Natural killer cell (primary cell): ENCODE measurements at regions of chr2 and their contacts with region 1.

Region 1: DNA sequence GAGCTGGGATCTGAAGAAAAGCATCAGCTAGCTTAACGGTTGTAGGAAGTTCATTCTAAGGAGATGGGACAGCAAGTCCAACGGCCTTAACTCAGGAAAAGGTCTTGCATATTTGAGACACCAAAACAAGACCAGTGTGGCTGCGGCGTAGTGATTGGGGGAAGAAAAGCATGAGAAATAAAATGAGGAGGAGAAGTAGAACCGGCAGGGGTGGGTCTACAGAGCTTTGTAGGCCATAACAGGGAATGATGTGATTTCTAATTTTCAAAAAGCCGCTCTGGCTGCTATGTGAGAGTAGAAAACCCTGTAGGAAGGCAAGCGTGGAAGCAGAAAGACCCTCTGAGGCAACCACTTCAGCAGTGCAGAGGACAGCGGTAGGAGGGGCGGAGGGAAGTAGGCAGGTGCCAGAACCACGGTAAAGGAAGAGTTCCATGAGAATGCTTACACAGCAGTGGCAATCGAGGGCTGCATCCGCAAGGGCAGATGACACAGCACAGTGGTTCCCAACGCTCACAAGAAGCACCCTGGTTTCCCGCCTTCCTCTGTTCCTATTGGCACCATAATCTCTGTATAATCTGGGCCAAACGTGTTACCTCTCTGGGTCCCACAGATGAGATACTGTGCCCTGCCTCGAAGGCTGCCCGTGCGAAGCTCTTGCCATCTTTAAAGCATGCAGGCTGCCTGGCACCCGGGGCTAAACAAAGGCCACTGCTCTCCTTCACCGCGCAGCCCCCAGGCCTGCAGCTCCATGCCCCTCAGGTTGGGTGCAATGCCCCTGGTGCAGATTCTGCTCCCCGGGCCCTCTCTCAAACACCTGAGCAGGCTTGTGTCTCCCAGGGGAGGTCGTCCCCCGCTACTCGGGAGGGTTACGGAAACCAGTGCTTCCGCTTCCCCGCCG is 791 bp downstream of the ANKRD39 start:
- DNase-seq: peak in 1 of 2 donors; percentile 57
- ATAC-seq: no peak
- H3K4me3 ChIP-seq: peak overlapping the region; percentile 77
- H3K4me3 Mint-ChIP-seq: peak overlapping the region; percentile 82
- H3K27ac ChIP-seq: peak overlapping the region; percentile 83
- H3K27ac Mint-ChIP-seq: peak overlapping the region; percentile 77 to 81
- H3K4me1 ChIP-seq: peaks cover 36% of the 10 kb centered on the region
- H3K4me1 Mint-ChIP-seq: peaks cover 34 to 46% of the 10 kb centered on the region in 2 donors
- H3K27me3 ChIP-seq: no peaks in the 10 kb centered on the region
- H3K27me3 Mint-ChIP-seq: no peaks in the 10 kb centered on the region
- CTCF ChIP-seq: no peak

Region 2: DNA sequence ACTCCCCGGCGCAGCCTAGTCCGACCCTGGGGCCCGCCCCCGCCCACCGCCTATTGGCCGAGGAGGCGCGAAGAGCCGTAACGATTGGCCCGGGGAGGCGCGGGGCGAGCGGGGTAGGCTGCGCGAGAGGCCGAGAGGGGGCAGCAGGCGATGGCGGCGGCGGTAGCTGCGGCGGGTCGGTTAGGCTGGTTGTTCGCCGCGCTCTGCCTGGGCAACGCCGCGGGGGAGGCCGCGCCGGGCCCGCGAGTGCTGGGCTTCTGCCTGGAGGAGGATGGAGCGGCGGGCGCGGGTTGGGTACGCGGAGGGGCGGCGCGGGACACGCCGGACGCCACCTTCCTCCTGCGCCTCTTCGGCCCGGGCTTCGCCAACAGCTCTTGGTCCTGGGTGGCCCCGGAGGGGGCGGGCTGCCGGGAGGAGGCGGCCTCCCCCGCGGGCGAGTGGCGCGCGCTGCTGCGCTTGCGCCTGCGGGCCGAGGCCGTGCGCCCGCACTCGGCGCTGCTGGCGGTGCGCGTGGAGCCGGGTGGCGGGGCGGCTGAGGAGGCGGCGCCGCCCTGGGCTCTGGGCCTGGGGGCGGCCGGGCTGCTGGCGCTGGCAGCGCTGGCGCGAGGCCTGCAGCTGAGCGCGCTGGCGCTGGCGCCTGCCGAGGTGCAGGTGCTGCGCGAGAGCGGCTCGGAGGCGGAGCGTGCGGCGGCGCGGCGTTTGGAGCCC is 40.7 kb before region 1 on chr2 and contains the start of gene CNNM3:
- intact Hi-C with region 1: loop called (anchors 5 kb)
- DNase-seq: peak; percentile 94 to 97
- ATAC-seq: peak; percentile 88 to 97 (median 89)
- H3K4me3 ChIP-seq: peak within 1 kb of the TSS; percentile 85
- H3K4me3 Mint-ChIP-seq: peak within 1 kb of the TSS; percentile 88
- H3K27ac ChIP-seq: peak within 1 kb of the TSS; percentile 71
- H3K27ac Mint-ChIP-seq: peak within 1 kb of the TSS; percentile 82
- H3K4me1 ChIP-seq: peaks cover 46% of the 10 kb centered on the region
- H3K4me1 Mint-ChIP-seq: peaks cover 56 to 66% of the 10 kb centered on the region in 2 donors
- H3K27me3 ChIP-seq: no peaks in the 10 kb centered on the region
- H3K27me3 Mint-ChIP-seq: no peaks in the 10 kb centered on the region
- CTCF ChIP-seq: peak; percentile 60
- total RNA-seq, gene CNNM3: 33.8 to 55.2 (median 45.6) TPM

Region 3: DNA sequence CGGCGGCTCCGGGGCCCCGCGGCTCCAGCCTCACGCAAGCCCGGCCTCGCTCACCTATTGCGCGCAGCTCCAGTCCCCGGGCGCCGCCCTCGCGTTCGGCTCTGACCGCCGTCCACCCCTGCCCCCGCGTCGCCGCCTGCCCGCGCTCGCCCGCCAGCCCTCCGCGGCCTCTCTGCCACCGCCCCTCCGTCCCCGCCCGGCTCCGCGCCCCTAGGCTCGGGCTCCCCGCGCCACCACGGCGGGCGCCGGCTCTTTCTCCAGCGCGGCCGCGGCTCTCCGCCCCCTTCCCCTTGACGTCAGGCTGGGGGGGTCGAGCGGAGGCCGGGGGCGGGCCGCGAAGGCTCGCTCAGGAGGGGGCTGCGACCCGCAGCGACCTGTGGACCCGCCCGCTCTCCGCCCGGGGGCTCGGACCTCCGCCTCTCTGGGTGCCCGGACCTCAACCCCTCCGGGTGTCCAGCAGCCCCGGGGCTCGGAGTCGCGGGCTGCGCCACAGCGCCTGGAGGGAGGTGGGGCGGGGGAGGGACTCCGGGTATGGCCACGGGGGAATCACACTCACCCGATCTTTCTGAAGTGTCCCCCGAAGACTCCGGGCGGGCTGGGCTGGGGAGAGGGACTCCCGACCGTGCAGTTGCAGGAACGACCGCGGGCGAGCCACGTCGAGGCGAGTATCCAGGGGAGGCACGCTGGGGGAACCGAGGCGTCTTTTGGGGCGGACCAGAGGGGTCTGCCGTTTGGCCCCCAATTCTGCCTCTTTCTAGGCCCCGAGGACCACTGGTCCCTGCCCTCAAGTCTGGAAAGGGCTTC is 13.0 kb after region 1 on chr2 and contains the start of gene SEMA4C:
- intact Hi-C with region 1: loop called (anchors 1 kb)
- DNase-seq: peak; percentile 71 to 80
- ATAC-seq: peak; percentile 54 to 63 (median 61)
- H3K4me3 ChIP-seq: peak within 1 kb of the TSS; percentile 82
- H3K4me3 Mint-ChIP-seq: peak within 1 kb of the TSS; percentile 93
- H3K27ac ChIP-seq: peak within 1 kb of the TSS; percentile 75
- H3K27ac Mint-ChIP-seq: peak within 1 kb of the TSS; percentile 89 to 90
- H3K4me1 ChIP-seq: peaks cover 61% of the 10 kb centered on the region
- H3K4me1 Mint-ChIP-seq: peaks cover 37 to 44% of the 10 kb centered on the region in 2 donors
- H3K27me3 ChIP-seq: no peaks in the 10 kb centered on the region
- H3K27me3 Mint-ChIP-seq: no peaks in the 10 kb centered on the region
- CTCF ChIP-seq: no peak
- total RNA-seq, gene SEMA4C: 51.8 to 78.1 (median 65.8) TPM

Region 4: GRCh38 chr2:96951093-96951654 is 94.1 kb after region 1 on chr2:
- intact Hi-C with region 1: loop called (anchors 1 kb)
- DNase-seq: peak; percentile 67 to 89
- ATAC-seq: peak; percentile 72 to 96 (median 95)
- H3K4me3 ChIP-seq: no peak overlapping the region
- H3K4me3 Mint-ChIP-seq: peak overlapping the region; percentile 28
- H3K27ac ChIP-seq: no peak overlapping the region
- H3K27ac Mint-ChIP-seq: peak overlapping the region in 1 of 2 donors; percentile 22
- H3K4me1 ChIP-seq: peaks cover 30% of the 10 kb centered on the region
- H3K4me1 Mint-ChIP-seq: peaks cover 19% of the 10 kb centered on the region in 2 donors
- H3K27me3 ChIP-seq: no peaks in the 10 kb centered on the region
- H3K27me3 Mint-ChIP-seq: no peaks in the 10 kb centered on the region
- CTCF ChIP-seq: peak; percentile 88

Region 5: DNA sequence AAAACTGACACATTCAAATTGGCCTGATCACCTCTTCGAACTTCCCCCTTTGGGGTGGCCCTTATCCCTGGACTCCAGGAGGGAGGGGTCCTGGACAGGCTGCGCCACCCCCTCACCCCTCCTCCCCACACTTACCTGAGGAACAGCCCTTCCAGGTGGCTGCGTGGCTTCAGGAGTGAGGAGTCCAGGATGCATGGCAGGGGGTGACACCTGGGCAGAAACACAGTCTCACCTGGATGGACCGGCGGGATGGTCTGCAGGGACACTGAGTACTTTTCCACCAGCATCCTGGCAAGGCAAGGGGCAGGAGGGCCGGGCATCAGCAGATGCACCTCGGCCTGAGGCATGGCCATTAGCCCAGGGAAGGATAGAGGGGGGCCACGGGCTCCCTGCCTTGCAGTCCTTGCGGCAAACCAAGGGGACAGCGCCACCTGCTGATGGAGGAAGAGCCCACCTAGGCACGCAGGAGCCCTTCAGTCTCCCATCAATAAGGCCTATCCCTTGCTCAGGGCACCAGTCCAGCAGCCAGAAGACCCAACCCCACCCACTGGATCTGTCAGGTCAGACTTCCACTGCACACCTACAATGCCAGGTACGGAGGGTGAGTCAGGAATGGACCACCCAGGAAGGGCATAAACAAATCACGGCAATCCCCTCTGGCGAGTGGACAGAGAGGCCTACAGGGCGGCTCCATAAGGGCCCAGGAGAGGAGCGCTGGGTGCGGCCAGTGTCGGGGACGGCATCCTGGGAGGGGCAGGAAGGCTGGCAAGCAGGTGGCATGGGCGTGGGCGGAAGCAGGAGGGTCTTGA is 103.3 kb after region 1 on chr2:
- intact Hi-C with region 1: loop called (anchors 1 kb)
- DNase-seq: peak; percentile 83 to 92
- ATAC-seq: peak; percentile 84 to 97 (median 89)
- H3K4me3 ChIP-seq: no peak overlapping the region
- H3K4me3 Mint-ChIP-seq: no peak overlapping the region
- H3K27ac ChIP-seq: no peak overlapping the region
- H3K27ac Mint-ChIP-seq: peak overlapping the region in 1 of 2 donors; percentile 36
- H3K4me1 ChIP-seq: peaks cover 36% of the 10 kb centered on the region
- H3K4me1 Mint-ChIP-seq: peaks cover 11 to 22% of the 10 kb centered on the region in 2 donors
- H3K27me3 ChIP-seq: no peaks in the 10 kb centered on the region
- H3K27me3 Mint-ChIP-seq: peaks cover 0 to 2% of the 10 kb centered on the region in 2 donors
- CTCF ChIP-seq: peak; percentile 89